ENCODE measurements at regions of chr19 and their contacts with region 1.

Region 1: DNA sequence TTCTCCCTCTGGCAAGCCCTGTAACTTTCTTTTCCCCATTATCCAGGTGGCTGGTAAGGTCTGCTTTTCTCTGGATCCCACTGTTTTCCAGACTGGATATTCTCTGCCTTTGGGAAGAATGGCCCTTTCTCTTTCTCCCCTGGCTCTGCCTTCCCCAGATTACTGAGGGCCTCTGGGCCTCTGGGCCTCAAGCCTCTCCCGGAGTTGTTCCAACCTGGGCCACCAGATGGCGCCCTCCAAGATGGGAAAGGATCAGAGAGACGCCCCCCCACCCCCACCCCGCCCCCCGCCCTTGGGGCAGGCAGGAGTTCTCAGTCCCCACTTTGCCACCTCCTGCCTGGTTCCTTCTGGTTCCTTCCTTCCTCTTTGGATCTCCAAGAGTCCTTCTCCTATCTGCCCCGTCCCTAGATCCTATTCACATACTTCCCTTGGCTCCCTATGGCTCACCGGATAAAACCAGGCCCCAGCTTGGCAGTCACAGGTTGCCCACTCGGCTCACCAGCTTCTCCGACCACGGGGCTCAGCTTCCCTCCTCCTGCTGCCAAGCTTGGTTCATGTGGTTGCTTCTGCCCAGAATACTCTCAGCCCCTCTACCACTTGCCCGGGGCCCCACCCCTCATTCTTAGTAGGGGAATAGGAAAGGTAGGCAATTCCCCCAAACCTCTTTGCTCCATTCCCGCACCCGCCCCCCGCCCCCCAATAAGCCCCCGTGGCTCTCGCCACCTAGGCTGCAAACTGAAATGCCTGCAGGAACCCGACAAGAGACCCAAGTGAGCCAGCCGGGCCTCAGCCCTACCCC is 13.1 kb downstream of the EPS8L1 start:
- DNase-seq: peak; percentile 69
- H3K4me3 Mint-ChIP-seq: no peak overlapping the region
- H3K27ac Mint-ChIP-seq: no peak overlapping the region
- H3K4me1 Mint-ChIP-seq: peaks cover 10% of the 10 kb centered on the region
- H3K27me3 Mint-ChIP-seq: no peaks in the 10 kb centered on the region
- CTCF ChIP-seq: peak; percentile 82

Region 2: GRCh38 chr19:55018633-55019032 is 70.1 kb before region 1 on chr19:
- CTCF ChIA-PET with region 1: no interaction called
- POLR2A ChIA-PET with region 1: no interaction called
- intact Hi-C with region 1: no loop called
- DNase-seq: no peak
- H3K4me3 Mint-ChIP-seq: no peak overlapping the region
- H3K27ac Mint-ChIP-seq: no peak overlapping the region
- H3K4me1 Mint-ChIP-seq: no peaks in the 10 kb centered on the region
- H3K27me3 Mint-ChIP-seq: no peaks in the 10 kb centered on the region
- CTCF ChIP-seq: no peak

Region 3: DNA sequence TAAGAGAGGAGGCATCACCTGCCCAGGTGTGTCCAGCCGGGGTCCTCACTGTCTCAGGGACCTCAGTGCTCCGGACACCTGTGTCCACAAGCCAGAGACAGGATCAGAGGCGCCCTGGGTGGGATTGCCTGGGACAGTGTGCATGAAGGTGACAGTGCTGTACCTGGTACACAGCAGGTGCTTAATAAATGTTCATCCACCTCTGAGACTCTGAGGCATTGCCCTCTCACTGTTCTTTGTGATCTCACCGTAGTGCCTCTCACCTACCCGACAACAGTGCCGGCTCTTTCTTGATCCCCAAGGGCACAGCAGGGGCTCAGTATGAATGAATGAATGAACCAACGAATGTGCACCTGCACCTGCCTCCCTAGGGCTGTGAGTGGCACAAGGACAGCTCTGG is 35.0 kb before region 1 on chr19:
- CTCF ChIA-PET with region 1: no interaction called
- POLR2A ChIA-PET with region 1: no interaction called
- intact Hi-C with region 1: no loop called
- DNase-seq: no peak
- H3K4me3 Mint-ChIP-seq: no peak overlapping the region
- H3K27ac Mint-ChIP-seq: no peak overlapping the region
- H3K4me1 Mint-ChIP-seq: no peaks in the 10 kb centered on the region
- H3K27me3 Mint-ChIP-seq: no peaks in the 10 kb centered on the region
- CTCF ChIP-seq: no peak

Region 4: GRCh38 chr19:55099533-55100506 is 11.1 kb after region 1 on chr19:
- CTCF ChIA-PET with region 1: interaction called, 36 read pairs
- POLR2A ChIA-PET with region 1: interaction called, 3 read pairs
- intact Hi-C with region 1: no loop called
- DNase-seq: no peak
- H3K4me3 Mint-ChIP-seq: no peak overlapping the region
- H3K27ac Mint-ChIP-seq: no peak overlapping the region
- H3K4me1 Mint-ChIP-seq: no peaks in the 10 kb centered on the region
- H3K27me3 Mint-ChIP-seq: no peaks in the 10 kb centered on the region
- CTCF ChIP-seq: no peak